OCI-LY7 (cell line): ENCODE measurements at regions of chr14 and their contacts with region 1.

Region 1: GRCh38 chr14:38197001-38197783 is 10.5 kb upstream of the SSTR1 start:
- DNase-seq: peak; percentile 74
- H3K4me3 ChIP-seq: no peak overlapping the region
- H3K27ac ChIP-seq: peak overlapping the region; percentile 42
- H3K4me1 ChIP-seq: peaks cover 34% of the 10 kb centered on the region
- CTCF ChIP-seq: peak; percentile 95

Region 2: DNA sequence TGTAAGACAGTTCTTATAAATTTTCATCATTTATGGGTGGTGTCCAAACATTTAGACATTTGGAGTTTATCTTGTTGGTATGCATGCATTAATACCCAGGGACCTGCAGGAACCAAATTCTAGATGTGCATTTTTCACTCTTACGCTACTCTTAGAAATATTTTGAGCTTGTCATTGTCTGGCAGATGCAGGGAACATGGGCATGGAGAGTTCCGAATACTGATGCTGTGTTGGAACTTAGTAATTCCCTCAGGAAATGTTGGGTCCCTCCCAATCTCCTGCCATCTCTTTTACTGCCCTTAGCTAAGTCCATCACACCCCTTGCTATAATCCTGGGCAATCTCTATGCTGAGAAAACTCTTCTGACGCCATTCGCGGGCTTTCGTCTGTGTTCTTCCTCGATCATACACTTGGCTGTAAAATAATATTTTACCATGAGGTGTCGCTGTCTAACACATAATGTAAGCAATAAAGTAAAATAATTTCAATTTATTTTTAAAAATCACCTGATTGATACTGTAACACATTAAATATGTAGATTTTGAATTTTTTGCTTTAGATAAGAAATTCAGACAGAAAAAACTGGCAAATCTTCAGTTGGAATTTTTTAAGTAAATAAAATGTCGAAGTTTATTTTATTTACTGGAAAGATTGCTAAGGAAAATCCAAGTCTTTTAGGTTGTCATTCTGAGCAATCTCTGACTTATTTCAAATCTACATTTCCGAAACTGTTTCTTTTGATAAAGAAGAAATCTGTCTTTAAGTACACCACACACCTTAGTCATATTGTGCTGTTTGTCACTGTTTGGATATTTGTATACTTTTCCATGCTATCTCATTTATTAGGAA is 293.6 kb before region 1 on chr14:
- CTCF ChIA-PET with region 1: no interaction called
- POLR2A ChIA-PET with region 1: no interaction called
- intact Hi-C with region 1: loop called (anchors 1 kb)
- DNase-seq: peak; percentile 74
- H3K4me3 ChIP-seq: no peak overlapping the region
- H3K27ac ChIP-seq: no peak overlapping the region
- H3K4me1 ChIP-seq: no peaks in the 10 kb centered on the region
- CTCF ChIP-seq: peak; percentile 94

Region 3: DNA sequence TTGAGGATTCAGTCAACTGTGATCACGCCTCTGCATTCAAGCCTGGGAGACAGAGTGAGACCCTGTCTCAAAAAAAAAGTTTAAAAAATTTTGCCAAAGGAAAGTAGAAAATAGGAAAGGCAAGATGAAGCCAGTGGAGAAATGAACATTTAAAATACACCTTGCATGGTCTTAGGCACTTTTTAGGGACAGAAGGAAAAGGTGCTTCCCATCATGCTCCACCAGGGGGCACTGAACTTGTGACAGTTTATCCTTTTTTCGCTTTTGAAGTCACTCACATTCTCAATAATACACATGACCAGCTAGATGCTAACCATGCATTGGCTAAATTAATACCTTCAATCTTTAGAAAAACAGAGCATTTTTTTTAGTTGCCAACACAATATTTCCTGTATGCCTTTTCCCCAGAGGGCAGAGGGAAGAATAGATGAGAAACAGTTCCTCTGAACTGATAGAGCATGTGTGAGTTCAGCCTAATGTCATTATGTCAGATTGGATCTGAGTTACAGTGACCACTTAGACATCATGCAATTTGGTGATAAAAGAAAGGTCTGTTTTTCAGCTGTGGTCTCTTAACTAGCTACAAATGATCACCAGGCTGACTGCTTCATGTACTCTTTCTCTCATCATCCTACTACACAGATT is 211.2 kb before region 1 on chr14:
- CTCF ChIA-PET with region 1: no interaction called
- POLR2A ChIA-PET with region 1: interaction called, 4 read pairs
- intact Hi-C with region 1: loop called (anchors 2 kb)
- DNase-seq: peak; percentile 84
- H3K4me3 ChIP-seq: no peak overlapping the region
- H3K27ac ChIP-seq: peak overlapping the region; percentile 6
- H3K4me1 ChIP-seq: peaks cover 7% of the 10 kb centered on the region
- CTCF ChIP-seq: peak; percentile 89

Region 4: GRCh38 chr14:38079268-38079667 is 117.9 kb before region 1 on chr14:
- CTCF ChIA-PET with region 1: no interaction called
- POLR2A ChIA-PET with region 1: no interaction called
- intact Hi-C with region 1: loop called (anchors 10 kb)
- DNase-seq: no peak
- H3K4me3 ChIP-seq: no peak overlapping the region
- H3K27ac ChIP-seq: no peak overlapping the region
- H3K4me1 ChIP-seq: peaks cover 36% of the 10 kb centered on the region
- CTCF ChIP-seq: no peak

Region 5: DNA sequence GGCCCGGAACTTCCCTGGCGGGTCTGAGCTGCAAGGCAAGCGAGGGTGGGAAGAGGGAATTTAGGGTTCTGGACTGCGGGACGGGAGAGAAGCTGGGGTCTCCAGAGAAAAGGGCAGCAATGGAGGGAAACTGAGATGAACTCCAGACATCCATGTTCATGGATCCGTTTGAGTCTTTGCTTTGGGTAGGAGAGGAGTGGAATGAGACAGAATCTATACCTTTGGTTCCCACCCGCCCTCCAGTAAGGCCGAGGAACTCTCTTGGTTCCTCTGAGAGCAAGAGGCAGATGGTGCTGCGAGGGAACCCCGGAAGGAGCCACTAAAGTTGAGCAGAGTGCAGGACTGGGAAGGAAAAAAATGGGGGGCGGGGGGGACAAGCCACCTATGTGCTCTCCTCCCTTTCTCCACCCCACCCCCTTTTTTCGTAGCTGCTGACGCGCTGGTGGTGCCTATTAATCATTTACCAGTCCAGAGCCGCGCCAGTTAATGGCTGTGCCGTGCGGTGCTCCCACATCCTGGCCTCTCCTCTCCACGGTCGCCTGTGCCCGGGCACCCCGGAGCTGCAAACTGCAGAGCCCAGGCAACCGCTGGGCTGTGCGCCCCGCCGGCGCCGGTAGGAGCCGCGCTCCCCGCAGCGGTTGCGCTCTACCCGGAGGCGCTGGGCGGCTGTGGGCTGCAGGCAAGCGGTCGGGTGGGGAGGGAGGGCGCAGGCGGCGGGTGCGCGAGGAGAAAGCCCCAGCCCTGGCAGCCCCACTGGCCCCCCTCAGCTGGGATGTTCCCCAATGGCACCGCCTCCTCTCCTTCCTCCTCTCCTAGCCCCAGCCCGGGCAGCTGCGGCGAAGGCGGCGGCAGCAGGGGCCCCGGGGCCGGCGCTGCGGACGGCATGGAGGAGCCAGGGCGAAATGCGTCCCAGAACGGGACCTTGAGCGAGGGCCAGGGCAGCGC is 11.7 kb after region 1 on chr14:
- CTCF ChIA-PET with region 1: no interaction called
- POLR2A ChIA-PET with region 1: no interaction called
- intact Hi-C with region 1: no loop called
- DNase-seq: no peak
- H3K4me3 ChIP-seq: no peak overlapping the region
- H3K27ac ChIP-seq: no peak overlapping the region
- H3K4me1 ChIP-seq: peaks cover 7% of the 10 kb centered on the region
- CTCF ChIP-seq: no peak